ENCODE measurements at regions of chr19 and their contacts with region 1.

Region 1: DNA sequence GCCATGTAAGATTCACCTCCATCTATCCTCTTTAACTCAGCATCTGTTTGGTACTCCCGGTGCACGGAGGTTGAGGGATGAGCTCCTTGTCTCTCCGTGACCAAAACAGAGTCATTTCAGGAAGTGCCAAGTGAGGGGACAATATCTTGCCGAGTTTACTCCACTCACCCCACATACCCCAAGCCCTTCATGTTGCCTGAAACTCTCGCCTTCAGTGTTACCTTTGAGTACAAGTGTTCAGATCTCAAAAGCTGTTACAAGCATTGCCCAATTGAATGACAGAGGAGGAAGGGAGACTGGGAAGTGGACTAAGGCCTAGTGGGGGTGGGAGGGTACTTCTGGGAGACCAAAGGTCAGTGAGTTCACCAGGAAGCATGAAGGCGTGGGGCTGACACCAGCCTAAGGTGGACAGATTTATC is 6.0 kb upstream of the SIGLEC12 start:
- DNase-seq: peak; percentile 64 to 91 (median 77)
- ATAC-seq: peak; percentile 86
- H3K4me3 ChIP-seq: peak overlapping the region; percentile 7; the same call in 1 of the 2 replicates
- H3K27ac ChIP-seq: peak overlapping the region; percentile 98
- H3K4me1 ChIP-seq: peaks cover 35 to 58% of the 10 kb centered on the region in 2 experiments
- H3K27me3 ChIP-seq: no peaks in the 10 kb centered on the region
- CTCF ChIP-seq: no peak
- EP300 ChIP-seq: no peak
- POLR2A ChIP-seq: peak; percentile 47; the same call in 1 of the 2 replicates
- RAD21 ChIP-seq: no peak

Region 2: GRCh38 chr19:51480590-51480989 is 27.1 kb before region 1 on chr19:
- CTCF ChIA-PET with region 1: no interaction called
- POLR2A ChIA-PET with region 1: interaction called, 12 read pairs
- in situ Hi-C with region 1: no loop called
- intact Hi-C with region 1: no loop called
- DNase-seq: peak; percentile 67 to 80 (median 74)
- ATAC-seq: peak; percentile 81
- H3K4me3 ChIP-seq: no peak overlapping the region
- H3K27ac ChIP-seq: no peak overlapping the region
- H3K4me1 ChIP-seq: peaks cover 12 to 20% of the 10 kb centered on the region in 2 experiments; a peak in 4 of 5 replicates
- H3K27me3 ChIP-seq: no peaks in the 10 kb centered on the region
- CTCF ChIP-seq: no peak
- EP300 ChIP-seq: no peak
- POLR2A ChIP-seq: no peak
- RAD21 ChIP-seq: 0 out of 4 replicates have a peak, but pooled peaks of 1 of the 2 experiments have one; percentile 20

Region 3: DNA sequence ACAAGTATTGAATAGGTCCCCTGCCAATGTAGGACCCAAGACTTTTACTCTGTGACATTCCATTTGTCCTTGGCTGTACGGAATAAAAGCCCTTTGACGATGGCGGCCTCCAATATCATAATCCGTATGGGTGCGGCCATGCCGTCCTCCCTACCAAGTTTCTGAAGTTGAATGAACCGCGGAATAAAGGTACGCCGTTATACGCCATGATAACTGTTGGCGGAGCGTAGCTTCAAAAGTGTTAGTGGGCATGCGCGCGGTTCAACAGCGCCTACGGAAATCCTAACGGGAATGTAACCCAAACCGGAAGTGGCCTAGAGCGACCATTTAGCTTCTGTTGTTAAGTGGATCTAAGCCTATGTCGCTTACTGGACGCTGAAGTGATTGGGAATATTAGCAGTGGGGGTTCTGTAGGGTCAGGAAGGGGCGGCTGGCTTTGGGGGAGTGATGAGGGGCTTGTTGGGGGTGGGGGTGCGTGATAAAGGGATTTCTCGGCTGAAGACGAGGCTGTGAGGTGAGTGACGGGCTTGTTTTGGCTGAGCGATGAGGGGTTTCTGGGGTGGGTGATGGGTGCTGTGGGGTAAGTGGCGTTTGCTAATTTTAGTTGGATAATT is 63.4 kb after region 1 on chr19 and contains the start of gene ZNF175:
- CTCF ChIA-PET with region 1: no interaction called
- POLR2A ChIA-PET with region 1: interaction called, 3 read pairs
- in situ Hi-C with region 1: no loop called
- intact Hi-C with region 1: loop called (anchors 2 kb)
- DNase-seq: peak; percentile 79 to 98 (median 82)
- ATAC-seq: peak; percentile 91
- H3K4me3 ChIP-seq: peak within 1 kb of the TSS; percentile 71
- H3K27ac ChIP-seq: peak within 1 kb of the TSS; percentile 76
- H3K4me1 ChIP-seq: peaks cover 14 to 54% of the 10 kb centered on the region in 2 experiments
- H3K27me3 ChIP-seq: no peaks in the 10 kb centered on the region
- CTCF ChIP-seq: no peak
- EP300 ChIP-seq: peak; percentile 43; the same call in 1 of the 2 replicates
- POLR2A ChIP-seq: peak; percentile 67
- RAD21 ChIP-seq: no peak
- polyA plus RNA-seq, gene ZNF175: 3.7 to 4.4 TPM